A549 (cell line): ENCODE measurements at regions of chr1 and their contacts with region 1.

Region 1: DNA sequence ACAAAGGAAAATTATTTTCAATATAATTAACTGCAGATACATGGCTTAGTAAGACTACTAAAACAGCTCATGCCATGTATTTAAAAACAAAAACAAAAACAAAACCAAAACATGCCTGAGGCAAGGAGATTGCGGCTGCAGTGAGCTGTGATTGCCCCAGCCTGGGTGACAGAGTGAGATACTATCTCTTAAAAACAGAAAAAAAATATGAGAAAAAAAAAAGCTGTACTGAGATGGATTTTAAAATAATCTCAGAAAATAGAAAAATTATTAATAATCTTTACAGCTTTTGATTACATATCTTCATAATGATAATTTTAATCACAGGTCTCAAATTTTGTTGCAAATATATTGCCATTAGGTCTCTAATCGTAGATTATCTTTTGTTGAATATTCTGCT is 24.0 kb upstream of the LIN9 start:
- DNase-seq: no peak
- ATAC-seq: peak in 1 of 2 experiments; percentile 47; a peak in 4 of 6 replicates
- H3K4me3 ChIP-seq: peak overlapping the region; percentile 35; the same call in 2 of the 3 replicates
- H3K27ac ChIP-seq: peak overlapping the region; percentile 48 to 59; a peak in 3 of 6 replicates
- H3K4me1 ChIP-seq: no peaks in the 10 kb centered on the region
- CTCF ChIP-seq: no peak
- EP300 ChIP-seq: no peak
- POLR2A ChIP-seq: no peak
- RAD21 ChIP-seq: no peak

Region 2: GRCh38 chr1:226128487-226129075 is 204.4 kb before region 1 on chr1:
- CTCF ChIA-PET with region 1: interaction called, 57 read pairs
- POLR2A ChIA-PET with region 1: interaction called, 10 read pairs
- DNase-seq: peak in 1 of 2 experiments; percentile 36
- ATAC-seq: no peak
- H3K4me3 ChIP-seq: peak overlapping the region; percentile 41
- H3K27ac ChIP-seq: peak overlapping the region; percentile 92 to 93
- H3K4me1 ChIP-seq: peaks cover 37% of the 10 kb centered on the region
- CTCF ChIP-seq: no peak
- EP300 ChIP-seq: no peak
- POLR2A ChIP-seq: no peak
- RAD21 ChIP-seq: no peak

Region 3: DNA sequence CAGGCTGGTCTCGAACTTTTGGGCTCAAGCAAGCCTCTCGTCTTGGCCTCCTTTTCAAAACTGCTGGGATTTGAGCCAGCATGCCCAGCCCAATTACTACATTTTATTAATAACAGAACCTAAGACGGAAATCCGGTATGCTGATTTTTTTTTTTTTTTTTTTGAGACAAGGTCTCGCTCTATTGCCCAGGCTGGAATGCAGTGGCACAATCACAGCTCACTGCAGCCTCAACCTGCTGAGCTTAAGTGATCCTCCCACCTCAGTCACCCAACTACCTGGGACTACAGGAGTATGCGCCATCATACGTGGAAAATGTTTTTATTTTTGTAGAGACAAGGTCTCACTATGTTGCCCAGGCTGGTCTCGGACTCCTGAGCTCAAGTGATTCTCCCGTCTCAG is 166.6 kb before region 1 on chr1:
- CTCF ChIA-PET with region 1: no interaction called
- POLR2A ChIA-PET with region 1: no interaction called
- DNase-seq: no peak
- ATAC-seq: no peak
- H3K4me3 ChIP-seq: no peak overlapping the region
- H3K27ac ChIP-seq: no peak overlapping the region
- H3K4me1 ChIP-seq: no peaks in the 10 kb centered on the region
- CTCF ChIP-seq: no peak
- EP300 ChIP-seq: no peak
- POLR2A ChIP-seq: no peak
- RAD21 ChIP-seq: no peak

Region 4: GRCh38 chr1:226308723-226309315 is 24.1 kb before region 1 on chr1 and contains the start of gene LIN9:
- CTCF ChIA-PET with region 1: interaction called, 17 read pairs
- POLR2A ChIA-PET with region 1: interaction called, 9 read pairs
- DNase-seq: peak; percentile 79 to 93
- ATAC-seq: peak; percentile 82 to 88
- H3K4me3 ChIP-seq: peak within 1 kb of the TSS; percentile 97
- H3K27ac ChIP-seq: peak within 1 kb of the TSS; percentile 96
- H3K4me1 ChIP-seq: peaks cover 20% of the 10 kb centered on the region
- CTCF ChIP-seq: no peak
- EP300 ChIP-seq: no peak
- POLR2A ChIP-seq: peak; percentile 66
- RAD21 ChIP-seq: no peak
- polyA plus RNA-seq, gene LIN9: 10.9 and 14.7 TPM in 2 replicates

Region 5: DNA sequence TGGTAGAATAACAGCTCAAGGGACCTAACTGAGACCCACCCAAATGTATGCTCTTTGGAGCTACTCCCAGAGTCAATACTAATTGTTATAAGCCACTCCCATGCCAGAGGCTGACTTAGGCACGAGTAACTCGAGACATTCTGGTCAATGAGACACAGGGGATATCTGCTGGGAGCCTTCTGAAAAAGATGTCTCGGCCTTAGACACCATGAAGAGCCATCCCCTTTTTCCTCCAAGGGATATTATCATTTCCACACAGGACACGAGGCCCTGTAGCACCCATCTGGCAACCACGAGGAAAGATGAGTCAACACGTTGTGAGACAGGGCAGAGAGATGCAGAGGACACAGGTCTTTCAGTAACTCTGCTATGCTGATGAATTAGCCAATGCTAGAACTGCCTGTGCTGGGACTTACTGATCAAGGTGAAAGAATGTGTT is 375.4 kb after region 1 on chr1:
- CTCF ChIA-PET with region 1: no interaction called
- POLR2A ChIA-PET with region 1: no interaction called
- DNase-seq: no peak
- ATAC-seq: no peak
- H3K4me3 ChIP-seq: no peak overlapping the region
- H3K27ac ChIP-seq: no peak overlapping the region
- H3K4me1 ChIP-seq: 0 out of 3 replicates have a peak, but pooled peaks cover 3% of the 10 kb centered on the region
- CTCF ChIP-seq: no peak
- EP300 ChIP-seq: no peak
- POLR2A ChIP-seq: no peak
- RAD21 ChIP-seq: no peak